PC-9 (cell line): ENCODE measurements at regions of chr3 and their contacts with region 1.

Region 1: GRCh38 chr3:134111616-134112015 is 81.9 kb upstream of the SLCO2A1 start:
- DNase-seq: no peak
- H3K4me3 ChIP-seq: no peak overlapping the region
- H3K27ac ChIP-seq: no peak overlapping the region
- H3K4me1 ChIP-seq: no peaks in the 10 kb centered on the region
- H3K27me3 ChIP-seq: no peaks in the 10 kb centered on the region
- CTCF ChIP-seq: no peak

Region 2: DNA sequence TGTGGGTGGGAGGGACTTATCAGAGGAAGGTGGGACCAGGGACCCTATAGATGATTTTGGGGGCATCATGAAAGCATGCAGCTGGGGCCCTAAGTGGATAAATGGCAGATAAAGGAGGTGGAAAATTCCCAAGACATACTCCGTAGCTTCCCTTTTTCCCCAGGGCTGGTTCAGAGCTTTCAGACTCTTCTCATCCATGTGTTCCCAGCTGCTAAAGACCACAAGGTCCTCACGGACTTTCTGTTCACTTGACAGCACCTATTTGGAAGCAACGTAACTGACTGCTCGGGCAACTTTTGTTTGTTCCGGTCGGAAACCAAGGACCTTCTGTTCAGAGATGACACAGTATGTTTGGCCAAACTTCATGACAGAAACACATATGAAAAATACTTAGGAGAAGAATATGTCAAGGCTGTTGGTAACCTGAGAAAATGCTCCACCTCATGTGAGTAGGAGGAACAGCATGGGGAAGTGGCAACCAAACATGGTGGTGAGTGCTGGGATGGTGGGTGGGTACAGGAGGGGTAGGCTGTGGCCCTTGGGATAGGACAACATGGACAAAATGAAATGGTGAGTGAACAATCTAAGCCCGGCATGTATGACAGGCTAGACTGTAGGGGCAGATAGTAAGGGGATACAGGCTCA is 334.7 kb before region 1 on chr3:
- CTCF ChIA-PET with region 1: no interaction called
- POLR2A ChIA-PET with region 1: interaction called, 10 read pairs
- intact Hi-C with region 1: no loop called
- DNase-seq: no peak
- H3K4me3 ChIP-seq: no peak overlapping the region
- H3K27ac ChIP-seq: no peak overlapping the region
- H3K4me1 ChIP-seq: no peaks in the 10 kb centered on the region
- H3K27me3 ChIP-seq: 0 out of 2 replicates have a peak, but pooled peaks cover 8% of the 10 kb centered on the region
- CTCF ChIP-seq: no peak

Region 3: GRCh38 chr3:133991637-133992036 is 120.0 kb before region 1 on chr3:
- CTCF ChIA-PET with region 1: no interaction called
- POLR2A ChIA-PET with region 1: no interaction called
- intact Hi-C with region 1: no loop called
- DNase-seq: no peak
- H3K4me3 ChIP-seq: no peak overlapping the region
- H3K27ac ChIP-seq: no peak overlapping the region
- H3K4me1 ChIP-seq: no peaks in the 10 kb centered on the region
- H3K27me3 ChIP-seq: peaks cover 2% of the 10 kb centered on the region; the same call in 1 of the 2 replicates
- CTCF ChIP-seq: no peak

Region 4: GRCh38 chr3:134161898-134162615 is 50.4 kb after region 1 on chr3:
- CTCF ChIA-PET with region 1: no interaction called
- POLR2A ChIA-PET with region 1: no interaction called
- intact Hi-C with region 1: no loop called
- DNase-seq: no peak
- H3K4me3 ChIP-seq: no peak overlapping the region
- H3K27ac ChIP-seq: no peak overlapping the region
- H3K4me1 ChIP-seq: no peaks in the 10 kb centered on the region
- H3K27me3 ChIP-seq: no peaks in the 10 kb centered on the region
- CTCF ChIP-seq: no peak